Activated CD4-positive, alpha-beta T cell treated with anti-CD3 and anti-CD28 coated beads, Interleukin-2, amount 10 ng/mL, durations not matched to agents 7 days and 5 days (primary cell): ENCODE measurements at regions of chr3 and their contacts with region 1.

Region 1: DNA sequence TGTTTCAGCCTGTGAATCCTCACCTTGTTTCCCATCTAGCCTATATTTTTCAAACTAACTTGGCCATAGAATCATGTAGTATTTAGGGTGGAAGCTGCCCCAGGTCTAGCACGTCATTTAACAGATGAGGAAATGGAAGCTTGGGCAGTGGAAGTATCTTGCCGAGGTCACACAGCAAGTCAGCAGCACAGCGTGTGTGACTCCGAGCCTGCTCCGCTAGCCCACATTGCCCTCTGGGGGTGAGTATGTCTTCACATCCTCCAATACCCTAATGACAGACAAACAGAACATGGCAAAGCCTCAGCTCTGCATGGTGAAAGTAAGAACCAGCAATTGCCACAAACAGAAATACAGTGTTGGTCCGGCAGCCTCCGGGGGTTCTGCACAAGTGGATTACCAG is 2.2 kb upstream of the CCR5 start:
- DNase-seq: peak; percentile 55
- H3K4me3 Mint-ChIP-seq: no peak overlapping the region
- H3K27ac Mint-ChIP-seq: peak overlapping the region; percentile 41
- H3K4me1 Mint-ChIP-seq: peaks cover 54% of the 10 kb centered on the region
- H3K27me3 Mint-ChIP-seq: peaks cover 37% of the 10 kb centered on the region

Region 2: DNA sequence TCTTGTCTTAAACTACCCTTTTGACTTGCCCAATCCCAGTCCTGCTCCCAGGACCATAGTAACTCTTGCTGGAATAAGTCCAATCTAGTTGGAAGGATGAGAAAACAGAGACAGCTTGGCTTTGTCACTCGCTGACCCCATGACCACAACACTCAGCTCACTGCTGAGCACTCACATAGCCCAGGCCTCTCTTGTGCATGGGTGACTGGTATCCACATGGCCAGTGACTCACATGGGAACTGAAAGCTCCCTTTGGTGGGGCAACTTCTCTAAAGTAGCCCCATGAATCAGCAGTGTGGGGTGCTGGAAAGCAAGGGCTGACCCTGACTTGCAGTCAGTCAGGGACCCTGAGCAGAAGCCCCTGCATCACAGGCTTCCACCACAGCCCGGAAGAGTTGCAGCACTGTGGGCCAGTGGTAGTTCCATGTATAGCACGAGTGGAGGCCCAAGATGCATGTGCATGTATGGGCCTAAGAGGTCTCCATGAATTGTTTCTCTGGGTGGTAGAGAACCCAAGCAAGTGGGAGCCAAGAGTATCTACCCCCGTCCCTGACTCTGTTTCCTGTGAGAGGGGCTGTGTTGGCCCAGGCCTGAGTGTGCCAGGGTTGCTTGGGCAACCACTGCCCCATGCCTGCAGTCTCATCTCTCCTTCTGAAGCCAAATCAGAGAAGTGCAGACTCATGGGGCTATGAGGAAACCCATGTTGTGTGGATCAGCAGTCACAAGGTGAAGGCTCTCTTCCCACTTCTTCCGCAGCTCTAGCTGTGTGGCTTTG is 279.1 kb before region 1 on chr3:
- CTCF ChIA-PET with region 1: interaction called, 13 read pairs
- POLR2A ChIA-PET with region 1: no interaction called
- DNase-seq: no peak
- H3K4me3 Mint-ChIP-seq: no peak overlapping the region
- H3K27ac Mint-ChIP-seq: no peak overlapping the region
- H3K4me1 Mint-ChIP-seq: peaks cover 39% of the 10 kb centered on the region
- H3K27me3 Mint-ChIP-seq: peaks cover 32% of the 10 kb centered on the region

Region 3: DNA sequence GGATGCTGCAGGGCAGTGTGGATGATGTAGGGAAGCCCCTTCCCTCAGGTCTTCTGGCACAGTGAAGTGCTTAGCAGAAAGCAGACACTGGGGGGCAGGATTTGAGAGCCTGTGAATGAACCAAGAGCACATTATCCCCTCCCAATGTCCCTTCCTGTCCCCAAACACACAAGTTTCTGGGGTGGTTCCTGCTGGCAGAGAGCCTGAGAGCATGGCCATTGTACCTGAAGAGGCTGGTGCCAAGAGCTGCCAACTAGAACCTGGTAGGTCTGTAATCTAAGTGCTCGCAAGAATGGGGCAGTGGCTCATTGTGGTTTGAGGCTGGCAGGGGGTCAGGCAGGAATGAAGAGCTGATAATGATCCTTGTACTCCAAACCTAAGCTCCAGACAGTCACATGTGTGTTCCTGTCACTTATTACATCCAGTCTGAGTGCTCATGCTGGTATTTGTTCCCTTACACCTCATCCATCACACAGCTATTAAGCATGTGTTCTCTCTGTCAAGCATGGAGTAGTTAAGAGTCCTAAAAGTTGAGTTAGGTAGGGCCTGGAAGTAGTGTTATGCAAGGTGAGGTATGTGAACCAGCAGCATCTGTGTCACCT is 153.7 kb before region 1 on chr3:
- CTCF ChIA-PET with region 1: interaction called, 39 read pairs
- POLR2A ChIA-PET with region 1: no interaction called
- DNase-seq: no peak
- H3K4me3 Mint-ChIP-seq: no peak overlapping the region
- H3K27ac Mint-ChIP-seq: no peak overlapping the region
- H3K4me1 Mint-ChIP-seq: peaks cover 23% of the 10 kb centered on the region
- H3K27me3 Mint-ChIP-seq: peaks cover 18% of the 10 kb centered on the region

Region 4: GRCh38 chr3:46284981-46285683 is 83.4 kb before region 1 on chr3:
- CTCF ChIA-PET with region 1: interaction called, 11 read pairs
- POLR2A ChIA-PET with region 1: no interaction called
- DNase-seq: peak; percentile 56
- H3K4me3 Mint-ChIP-seq: peak overlapping the region; percentile 25
- H3K27ac Mint-ChIP-seq: peak overlapping the region; percentile 54
- H3K4me1 Mint-ChIP-seq: peaks cover 74% of the 10 kb centered on the region
- H3K27me3 Mint-ChIP-seq: peaks cover 5% of the 10 kb centered on the region

Region 5: DNA sequence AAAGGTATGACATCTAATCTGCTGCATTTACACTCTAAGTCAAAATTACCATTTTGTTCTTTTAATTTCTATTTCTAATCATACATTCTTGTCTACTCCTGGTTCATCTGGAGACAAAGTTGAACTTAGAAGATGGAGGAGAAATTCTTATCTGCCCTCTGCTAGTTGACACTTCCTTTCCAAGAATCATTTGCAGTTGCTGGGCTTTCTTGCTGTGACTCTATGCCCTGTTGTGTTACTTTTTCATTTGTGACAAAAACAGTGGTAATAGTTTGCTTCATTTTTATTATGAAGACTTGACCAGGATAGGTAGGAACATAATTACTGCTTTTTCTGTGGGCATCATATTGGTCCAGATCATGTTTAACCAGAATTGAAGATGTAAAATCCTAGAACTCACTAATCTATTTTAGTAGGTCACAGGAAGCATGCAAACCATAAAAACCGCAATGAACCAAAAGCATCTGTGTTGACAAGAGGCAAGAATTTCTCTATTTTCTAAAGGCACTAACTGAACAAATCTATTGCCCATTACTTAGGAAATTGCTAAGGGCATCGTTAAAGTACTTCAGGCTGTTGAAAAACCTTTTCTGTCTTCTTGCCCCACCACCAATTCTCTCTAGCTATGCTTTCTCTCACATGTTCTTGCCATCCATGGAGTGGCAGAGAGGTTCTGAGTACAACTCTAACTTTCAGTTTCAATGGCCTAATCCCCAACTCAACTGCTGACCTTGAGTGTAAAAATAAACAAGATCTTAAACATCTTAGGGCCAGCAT is 18.9 kb before region 1 on chr3:
- CTCF ChIA-PET with region 1: interaction called, 18 read pairs
- POLR2A ChIA-PET with region 1: no interaction called
- DNase-seq: peak; percentile 52
- H3K4me3 Mint-ChIP-seq: peak overlapping the region; percentile 48
- H3K27ac Mint-ChIP-seq: peak overlapping the region; percentile 87
- H3K4me1 Mint-ChIP-seq: peaks cover 71% of the 10 kb centered on the region
- H3K27me3 Mint-ChIP-seq: peaks cover 27% of the 10 kb centered on the region

Region 6: DNA sequence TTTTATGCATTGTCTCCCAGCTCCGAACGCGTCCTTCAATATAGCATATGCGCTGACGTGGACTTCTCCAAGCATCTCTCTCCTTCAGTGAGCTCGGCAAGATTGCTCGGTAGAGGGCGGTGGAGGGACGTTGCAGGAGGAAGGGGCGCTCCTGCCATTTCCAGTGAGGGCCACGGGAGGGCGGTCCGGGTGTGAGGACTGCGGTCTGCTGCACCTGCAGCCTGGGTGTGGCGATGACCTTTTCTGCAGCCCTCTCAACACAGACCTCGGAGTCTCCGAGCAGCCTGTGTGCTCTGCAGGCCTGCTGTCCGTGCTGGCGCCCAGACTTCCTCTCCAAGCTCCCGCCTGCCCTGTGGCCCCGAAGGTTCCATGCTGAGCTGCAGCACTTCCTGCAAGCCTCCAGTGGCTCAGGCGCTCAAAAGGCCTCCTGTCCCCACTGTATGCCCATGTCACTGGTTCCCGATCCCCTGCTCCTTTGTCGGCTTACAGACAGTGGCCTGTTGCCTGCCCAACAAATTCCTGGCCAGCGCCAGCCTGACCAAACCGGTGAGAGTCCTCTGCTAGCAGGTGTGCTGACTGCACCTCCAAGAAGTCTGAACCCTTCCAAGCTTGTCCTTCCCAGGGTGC is 120.3 kb after region 1 on chr3:
- CTCF ChIA-PET with region 1: interaction called, 10 read pairs
- POLR2A ChIA-PET with region 1: no interaction called
- DNase-seq: peak; percentile 95
- H3K4me3 Mint-ChIP-seq: peak overlapping the region; percentile 9
- H3K27ac Mint-ChIP-seq: peak overlapping the region; percentile 60
- H3K4me1 Mint-ChIP-seq: peaks cover 27% of the 10 kb centered on the region
- H3K27me3 Mint-ChIP-seq: peaks cover 12% of the 10 kb centered on the region